ENCODE measurements at regions of chr4 and their contacts with region 1.

Region 1: DNA sequence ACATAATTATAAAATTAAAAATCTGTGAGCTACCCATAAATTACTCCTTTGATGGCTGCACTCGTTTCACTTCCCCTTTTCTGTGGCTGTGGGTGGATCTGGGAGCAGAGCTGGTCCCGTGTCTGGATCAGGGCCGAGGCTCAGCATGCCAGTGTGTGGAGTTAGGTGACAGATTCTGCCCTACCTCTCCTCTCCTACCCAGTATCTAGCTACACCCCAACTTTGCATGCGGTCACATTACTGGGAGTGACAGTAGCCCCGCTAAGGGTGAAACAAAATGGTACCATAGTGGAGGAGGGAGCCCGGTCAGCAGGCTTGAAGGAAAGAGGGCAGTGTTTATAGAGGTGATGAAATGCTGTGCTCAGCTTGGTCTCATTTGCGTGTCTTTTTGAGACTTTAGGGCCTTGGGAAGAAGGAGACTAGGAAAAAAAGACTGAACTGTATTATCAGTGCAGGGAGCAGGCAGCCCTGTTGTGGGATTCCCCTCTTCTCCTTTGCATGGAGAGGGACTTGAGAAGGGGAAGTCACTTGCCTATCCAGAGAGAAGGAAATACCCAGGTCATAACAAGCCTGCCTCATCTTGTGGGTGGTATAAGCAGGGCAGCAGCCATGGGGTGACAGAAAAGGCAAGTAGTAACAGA is 48.4 kb downstream of the ARHGAP10 start:
- DNase-seq: no peak
- CTCF ChIP-seq: no peak

Region 2: GRCh38 chr4:147625733-147626132 is 154.5 kb before region 1 on chr4:
- CTCF ChIA-PET with region 1: no interaction called
- POLR2A ChIA-PET with region 1: no interaction called
- DNase-seq: no peak
- CTCF ChIP-seq: no peak

Region 3: DNA sequence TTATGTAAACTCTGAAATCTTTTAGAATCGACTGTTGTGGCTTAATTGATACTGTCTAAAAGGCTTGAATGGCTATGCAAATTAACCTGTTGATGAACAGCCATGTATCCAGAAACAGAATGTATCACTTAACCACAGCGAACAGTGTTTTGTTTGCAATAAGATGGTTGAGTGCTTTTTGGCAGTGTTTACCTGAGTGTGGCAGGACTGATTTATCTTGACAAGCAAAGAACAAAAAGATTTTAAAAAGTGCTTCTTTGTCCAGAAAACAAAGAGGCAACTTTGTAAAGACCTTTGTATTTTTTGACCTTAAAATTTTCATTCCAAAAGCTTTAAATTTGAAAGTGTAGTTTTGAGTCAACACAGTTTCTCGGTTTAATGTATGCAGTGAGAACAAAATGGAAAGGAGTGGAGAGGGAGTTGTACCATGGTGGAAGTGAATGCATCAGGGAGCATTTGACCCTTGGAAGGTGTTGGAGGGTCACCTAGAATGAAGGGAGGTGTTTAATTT is 30.4 kb before region 1 on chr4:
- CTCF ChIA-PET with region 1: no interaction called
- POLR2A ChIA-PET with region 1: no interaction called
- DNase-seq: peak; percentile 58
- CTCF ChIP-seq: no peak

Region 4: GRCh38 chr4:147793569-147794313 is 13.5 kb after region 1 on chr4:
- CTCF ChIA-PET with region 1: interaction called, 14 read pairs
- POLR2A ChIA-PET with region 1: no interaction called
- DNase-seq: peak; percentile 34
- CTCF ChIP-seq: no peak

Region 5: DNA sequence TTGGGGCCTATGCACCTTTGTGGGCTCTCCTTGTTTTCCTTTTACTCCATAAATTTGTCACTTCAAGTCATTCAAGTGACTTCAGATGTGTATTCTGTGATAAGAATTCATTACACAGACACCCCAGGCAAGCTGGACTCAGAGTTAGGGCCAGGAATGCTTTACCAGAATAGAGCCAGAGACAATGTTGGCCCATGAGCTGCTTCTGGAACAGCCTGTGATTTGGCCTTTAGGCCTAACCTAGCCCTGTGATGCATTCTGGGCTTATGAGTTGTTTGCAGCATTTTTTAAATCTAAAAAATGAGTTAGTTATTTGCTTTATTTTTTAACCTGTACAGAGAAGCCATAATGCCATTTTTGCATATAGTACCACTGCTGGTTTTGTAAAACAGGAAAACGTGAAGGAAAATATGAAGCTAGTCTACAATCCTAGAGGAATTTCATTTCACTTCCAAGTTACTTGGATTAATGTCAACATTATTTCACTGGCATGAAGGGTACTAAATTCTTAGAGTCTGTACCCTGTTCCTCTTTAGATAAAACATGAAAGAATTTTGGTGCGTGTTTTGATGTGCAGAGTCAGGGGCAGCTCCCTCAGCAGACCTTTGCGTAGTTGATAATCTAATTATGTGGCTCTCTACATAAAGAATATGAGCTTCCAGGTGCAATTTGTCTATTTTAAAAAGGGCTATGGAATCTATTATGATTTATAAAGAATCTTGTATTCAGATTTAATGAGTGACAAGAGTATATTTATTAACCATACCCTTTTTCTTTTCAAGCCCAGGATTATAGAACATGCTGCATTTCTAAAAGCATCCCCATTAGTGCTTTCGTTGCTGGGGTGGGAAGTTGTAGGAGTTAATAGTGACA is 36.4 kb after region 1 on chr4:
- CTCF ChIA-PET with region 1: no interaction called
- POLR2A ChIA-PET with region 1: no interaction called
- DNase-seq: no peak
- CTCF ChIP-seq: no peak

Measured in GM10248 (cell line).